Cardiac septum (tissue), 1 donor: ENCODE measurements at regions of chr3 and their contacts with region 1.

Region 1: DNA sequence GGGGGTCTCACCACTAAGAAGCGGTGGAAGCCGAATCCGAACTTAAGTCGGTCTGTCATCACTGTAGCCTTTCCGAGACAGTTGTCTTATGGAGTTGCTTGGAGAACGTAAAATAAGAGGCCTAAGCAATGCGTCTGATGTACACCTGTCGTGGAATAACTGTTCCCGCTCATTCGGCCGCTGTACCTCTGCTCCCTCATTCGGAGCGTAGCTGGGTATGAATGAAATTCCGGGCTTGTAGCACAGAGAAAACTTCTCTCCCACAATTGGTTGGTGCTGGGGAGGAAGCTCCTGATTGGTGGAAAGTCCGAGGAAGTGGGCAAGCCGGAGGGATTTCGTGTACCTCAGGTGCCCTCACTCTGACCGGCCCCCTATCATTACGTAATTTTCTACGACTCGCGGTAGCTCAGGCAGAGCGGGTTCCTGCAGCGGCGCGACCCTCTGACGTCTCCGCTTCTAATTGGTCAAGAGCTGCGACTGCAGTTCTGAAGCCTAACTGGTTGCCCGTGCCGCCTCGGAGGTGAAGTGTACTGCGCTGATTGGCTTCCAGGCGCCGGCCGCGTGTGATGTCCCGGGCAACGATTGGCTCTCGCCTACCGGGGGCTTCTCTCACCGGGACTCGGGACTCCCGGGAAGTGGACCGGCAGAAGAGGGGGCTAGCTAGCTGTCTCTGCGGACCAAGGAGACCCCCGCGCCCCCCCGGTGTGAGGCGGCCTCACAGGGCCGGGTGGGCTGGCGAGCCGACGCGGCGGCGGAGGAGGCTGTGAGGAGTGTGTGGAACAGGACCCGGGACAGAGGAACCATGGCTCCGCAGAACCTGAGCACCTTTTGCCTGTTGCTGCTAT is at the start of gene DNAJB11:
- DNase-seq: peak; percentile 100
- total RNA-seq, gene DNAJB11: 34.3 TPM

Region 2: DNA sequence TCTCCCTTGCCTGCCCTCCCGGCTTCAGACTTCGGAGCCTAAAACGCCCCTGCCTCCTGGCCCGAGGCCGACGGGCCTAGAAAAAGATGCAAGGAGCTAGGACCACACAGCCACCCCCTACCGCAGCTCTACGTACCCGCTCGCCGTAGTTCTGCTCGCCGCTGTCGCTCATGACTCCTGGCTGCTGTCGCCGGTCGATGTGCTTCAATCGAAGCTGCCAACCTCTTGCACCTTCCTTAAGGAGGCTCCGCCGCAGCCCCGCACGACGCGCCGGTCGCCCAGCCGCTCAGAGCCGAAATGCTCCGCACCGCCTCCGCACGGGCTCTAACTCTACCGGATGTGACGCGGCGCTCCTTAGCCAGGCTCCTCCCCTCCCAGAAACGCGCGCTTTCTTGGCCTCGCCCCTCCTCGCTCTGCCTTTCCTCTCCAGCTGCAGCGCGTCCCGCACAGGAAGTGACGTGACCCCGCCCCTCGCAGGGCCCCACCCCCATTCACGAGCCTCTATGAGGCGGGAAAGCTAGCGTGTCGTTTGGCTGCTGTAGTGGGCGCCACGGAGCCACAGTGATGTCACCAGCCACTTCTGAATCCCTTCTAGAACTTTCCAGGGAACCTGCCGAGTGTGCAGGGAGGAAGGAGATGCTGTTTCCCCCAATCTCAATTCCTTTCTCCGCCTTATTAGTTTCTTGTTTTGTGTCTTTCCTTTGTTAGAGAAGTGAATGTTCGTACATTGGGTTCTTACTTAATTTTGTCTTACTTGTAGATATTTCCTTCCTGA is 632.4 kb before region 1 on chr3 and contains the start of gene TRA2B:
- intact Hi-C with region 1: loop called (anchors 5 kb)
- DNase-seq: peak; percentile 100
- total RNA-seq, gene TRA2B: 62.1 TPM

Region 3: DNA sequence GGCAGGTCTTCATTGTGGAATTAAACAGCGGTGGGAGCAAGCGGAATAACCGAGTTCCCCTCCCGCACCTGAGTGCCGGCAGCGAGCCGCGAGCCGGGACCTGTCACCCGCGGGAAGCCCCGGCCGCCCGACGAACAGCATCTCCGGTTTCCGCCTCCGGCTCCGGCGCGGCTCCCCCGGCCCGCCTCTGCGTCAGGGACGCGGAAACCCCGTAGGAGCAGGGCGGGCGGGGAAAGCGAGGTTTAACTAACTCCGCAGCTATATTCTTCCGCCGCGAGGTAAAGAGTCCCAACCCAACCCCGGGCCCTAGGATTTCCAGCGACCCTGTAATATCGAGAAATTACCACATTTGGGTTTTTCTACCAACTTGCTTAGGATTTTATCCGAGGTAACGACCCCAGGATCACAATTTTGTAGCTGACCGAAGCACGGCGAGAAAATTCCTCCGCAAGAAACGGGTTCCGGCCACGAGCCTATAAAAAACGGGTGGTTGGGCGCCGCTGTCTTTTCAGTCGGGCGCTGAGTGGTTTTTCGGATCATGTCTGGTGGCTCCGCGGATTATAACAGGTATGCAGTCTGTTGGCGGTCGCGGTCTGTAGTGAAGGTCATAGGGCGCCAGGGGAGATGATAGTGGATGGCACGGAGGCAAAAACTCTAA is 212.9 kb after region 1 on chr3 and contains the start of gene EIF4A2:
- intact Hi-C with region 1: loop called (anchors 2 kb)
- DNase-seq: peak; percentile 95
- total RNA-seq, gene EIF4A2: 361 TPM